ENCODE measurements at regions of chr4 and their contacts with region 1.

Region 1: GRCh38 chr4:85968945-85969819 is 390.7 kb downstream of the MAPK10 start:
- DNase-seq: peak; percentile 66
- ATAC-seq: peak; percentile 28
- H3K4me3 ChIP-seq: no peak overlapping the region
- H3K4me3 Mint-ChIP-seq: no peak overlapping the region
- H3K27ac ChIP-seq: no peak overlapping the region
- H3K27ac Mint-ChIP-seq: no peak overlapping the region
- H3K4me1 ChIP-seq: peaks cover 0 to 6% of the 10 kb centered on the region in 2 donors
- H3K4me1 Mint-ChIP-seq: peaks cover 15% of the 10 kb centered on the region
- H3K27me3 ChIP-seq: no peaks in the 10 kb centered on the region
- H3K27me3 Mint-ChIP-seq: no peaks in the 10 kb centered on the region
- CTCF ChIP-seq: peak; percentile 75

Region 2: GRCh38 chr4:85756938-85757337 is 212.2 kb before region 1 on chr4:
- CTCF ChIA-PET with region 1: interaction called, 17 read pairs
- POLR2A ChIA-PET with region 1: no interaction called
- intact Hi-C with region 1: loop called (anchors 1 kb)
- DNase-seq: no peak
- ATAC-seq: peak; percentile 36
- H3K4me3 ChIP-seq: no peak overlapping the region
- H3K4me3 Mint-ChIP-seq: no peak overlapping the region
- H3K27ac ChIP-seq: no peak overlapping the region
- H3K27ac Mint-ChIP-seq: no peak overlapping the region
- H3K4me1 ChIP-seq: peaks cover 0 to 7% of the 10 kb centered on the region in 2 donors
- H3K4me1 Mint-ChIP-seq: peaks cover 14% of the 10 kb centered on the region
- H3K27me3 ChIP-seq: no peaks in the 10 kb centered on the region
- H3K27me3 Mint-ChIP-seq: no peaks in the 10 kb centered on the region
- CTCF ChIP-seq: peak; percentile 31

Region 3: DNA sequence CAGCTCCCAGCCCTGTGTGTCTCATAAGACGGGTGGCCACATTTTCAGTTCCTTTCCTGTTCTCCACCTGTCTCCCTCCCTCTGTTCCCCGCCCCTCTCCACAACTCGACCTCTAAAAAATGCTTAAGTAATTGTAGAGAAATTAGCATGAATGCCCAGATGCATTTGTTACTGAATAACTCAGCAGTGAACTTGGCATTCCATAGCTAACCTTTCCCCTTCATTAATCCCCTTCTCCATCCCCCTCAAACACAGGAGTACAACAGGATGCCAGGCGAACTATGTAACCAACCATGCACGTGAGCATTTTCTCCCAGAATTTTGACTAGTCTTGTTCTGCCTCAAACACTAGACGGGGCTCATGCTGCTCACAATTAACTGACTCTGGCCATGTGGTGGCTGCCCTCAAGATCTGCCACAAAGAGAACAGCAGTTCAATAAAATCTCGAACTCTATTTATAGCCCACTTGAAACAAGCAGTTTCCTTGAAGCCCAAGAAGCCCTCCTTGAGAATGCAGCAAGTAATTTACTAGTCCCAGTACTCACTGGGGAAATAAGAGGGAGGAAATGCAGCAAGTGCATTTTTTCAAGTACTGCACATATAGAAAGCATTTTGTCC is 143.0 kb before region 1 on chr4:
- CTCF ChIA-PET with region 1: no interaction called
- POLR2A ChIA-PET with region 1: no interaction called
- intact Hi-C with region 1: loop called (anchors 10 kb)
- DNase-seq: no peak
- ATAC-seq: no peak
- H3K4me3 ChIP-seq: no peak overlapping the region
- H3K4me3 Mint-ChIP-seq: no peak overlapping the region
- H3K27ac ChIP-seq: peak overlapping the region in 1 of 2 donors; percentile 25
- H3K27ac Mint-ChIP-seq: peak overlapping the region; percentile 13
- H3K4me1 ChIP-seq: peaks cover 5 to 28% of the 10 kb centered on the region in 2 donors
- H3K4me1 Mint-ChIP-seq: peaks cover 42% of the 10 kb centered on the region
- H3K27me3 ChIP-seq: no peaks in the 10 kb centered on the region
- H3K27me3 Mint-ChIP-seq: no peaks in the 10 kb centered on the region
- CTCF ChIP-seq: no peak

Region 4: GRCh38 chr4:86564795-86565194 is 595.6 kb after region 1 on chr4:
- CTCF ChIA-PET with region 1: no interaction called
- POLR2A ChIA-PET with region 1: no interaction called
- intact Hi-C with region 1: no loop called
- DNase-seq: no peak
- ATAC-seq: no peak
- H3K4me3 ChIP-seq: no peak overlapping the region
- H3K4me3 Mint-ChIP-seq: no peak overlapping the region
- H3K27ac ChIP-seq: no peak overlapping the region
- H3K27ac Mint-ChIP-seq: no peak overlapping the region
- H3K4me1 ChIP-seq: no peaks in the 10 kb centered on the region
- H3K4me1 Mint-ChIP-seq: no peaks in the 10 kb centered on the region
- H3K27me3 ChIP-seq: no peaks in the 10 kb centered on the region
- H3K27me3 Mint-ChIP-seq: peaks cover 17% of the 10 kb centered on the region
- CTCF ChIP-seq: no peak

Measured in B cell (primary cell).